Activated CD4-positive, alpha-beta T cell treated with anti-CD3 and anti-CD28 coated beads for 36 hours (primary cell): ENCODE measurements at regions of chr10 and their contacts with region 1.

Region 1: GRCh38 chr10:79195091-79195923 is 126.5 kb downstream of the ZMIZ1 start:
- DNase-seq: peak; percentile 89
- ATAC-seq: peak; percentile 93
- H3K4me3 Mint-ChIP-seq: no peak overlapping the region
- H3K27ac Mint-ChIP-seq: no peak overlapping the region
- H3K4me1 Mint-ChIP-seq: no peaks in the 10 kb centered on the region
- H3K27me3 Mint-ChIP-seq: no peaks in the 10 kb centered on the region

Region 2: DNA sequence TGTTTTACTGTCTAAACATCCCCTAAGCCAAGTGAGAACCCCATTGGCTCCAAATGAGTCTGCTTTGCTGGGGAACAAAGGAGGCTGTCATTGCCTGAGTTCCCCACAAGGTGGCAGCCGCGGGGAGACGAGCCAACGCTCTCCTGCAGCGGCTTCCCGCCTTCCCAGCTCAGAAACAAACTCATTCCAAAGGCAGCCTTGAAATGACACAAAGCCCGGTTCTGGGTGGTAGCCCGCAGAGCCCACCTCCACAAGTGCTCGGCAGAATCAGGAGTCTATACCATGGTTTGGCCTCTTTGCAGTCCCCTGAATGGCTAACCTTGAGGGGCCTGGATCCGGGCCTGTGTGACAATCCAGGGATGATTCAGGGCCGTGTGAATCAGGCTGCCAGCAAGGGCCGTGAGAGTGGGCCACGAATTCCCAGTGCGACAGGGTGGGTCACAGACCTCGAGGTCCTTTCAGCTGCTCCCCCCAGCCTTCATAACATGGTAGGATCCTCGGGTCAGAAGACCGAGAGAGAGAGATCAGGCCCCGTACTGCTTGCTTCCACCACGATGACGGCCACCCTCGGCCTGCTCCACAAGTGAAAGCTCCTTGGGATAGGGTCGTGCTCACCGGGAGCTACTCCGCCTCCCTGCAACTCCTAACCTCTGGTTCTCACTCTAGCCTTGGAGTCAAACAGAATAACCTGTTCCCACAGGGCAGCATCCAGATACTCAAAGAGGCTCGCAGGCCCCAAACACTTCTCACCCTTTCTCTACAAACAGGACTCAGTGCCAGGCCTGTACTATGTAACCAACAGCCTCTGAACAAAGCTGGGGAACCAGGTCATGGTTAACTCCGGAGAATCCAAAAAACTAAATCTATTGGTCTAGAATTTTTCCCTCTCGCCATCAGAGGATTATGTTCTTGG is 1348.3 kb before region 1 on chr10:
- CTCF ChIA-PET with region 1: interaction called, 3 read pairs
- POLR2A ChIA-PET with region 1: no interaction called
- intact Hi-C with region 1: loop called in 1 of 2 experiments (anchors 2 kb)
- DNase-seq: peak; percentile 79
- ATAC-seq: peak; percentile 89
- H3K4me3 Mint-ChIP-seq: no peak overlapping the region
- H3K27ac Mint-ChIP-seq: no peak overlapping the region
- H3K4me1 Mint-ChIP-seq: no peaks in the 10 kb centered on the region
- H3K27me3 Mint-ChIP-seq: no peaks in the 10 kb centered on the region

Region 3: GRCh38 chr10:78255796-78256638 is 939.3 kb before region 1 on chr10:
- CTCF ChIA-PET with region 1: no interaction called
- POLR2A ChIA-PET with region 1: no interaction called
- intact Hi-C with region 1: loop called in 1 of 2 experiments (anchors 5 kb)
- DNase-seq: no peak
- ATAC-seq: no peak
- H3K4me3 Mint-ChIP-seq: no peak overlapping the region
- H3K27ac Mint-ChIP-seq: no peak overlapping the region
- H3K4me1 Mint-ChIP-seq: no peaks in the 10 kb centered on the region
- H3K27me3 Mint-ChIP-seq: no peaks in the 10 kb centered on the region

Region 4: DNA sequence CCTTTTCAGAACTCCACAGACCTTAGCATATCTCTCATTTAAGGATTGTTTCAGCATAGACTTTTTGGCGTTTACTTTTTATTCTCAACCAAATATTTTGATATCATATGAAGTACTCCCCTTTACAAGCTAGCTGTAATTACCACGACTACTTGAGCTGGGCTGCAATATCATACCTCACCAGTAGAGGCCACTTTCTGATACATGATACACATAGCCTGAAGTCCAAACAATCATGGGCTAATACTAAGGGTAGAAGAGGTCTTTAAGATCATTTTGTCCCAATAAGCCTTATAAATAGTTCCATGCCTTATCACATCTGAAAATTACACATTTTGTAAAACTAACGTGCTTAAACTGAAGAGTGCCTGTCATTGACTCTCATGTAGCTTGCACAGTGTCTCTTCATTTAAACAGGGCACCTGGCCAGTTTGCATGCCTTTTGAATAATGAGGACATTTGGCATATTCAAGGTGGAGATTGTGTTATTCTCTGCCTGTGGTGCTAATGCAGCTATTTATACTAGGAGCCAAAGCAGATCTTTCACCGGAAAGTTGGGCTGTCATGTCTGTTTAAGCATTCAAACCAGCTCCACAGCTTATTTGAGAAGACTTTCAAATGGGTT is 530.3 kb before region 1 on chr10:
- CTCF ChIA-PET with region 1: interaction called, 6 read pairs
- POLR2A ChIA-PET with region 1: no interaction called
- intact Hi-C with region 1: loop called in 1 of 2 experiments (anchors 2 kb)
- DNase-seq: peak; percentile 32
- ATAC-seq: no peak
- H3K4me3 Mint-ChIP-seq: no peak overlapping the region
- H3K27ac Mint-ChIP-seq: no peak overlapping the region
- H3K4me1 Mint-ChIP-seq: no peaks in the 10 kb centered on the region
- H3K27me3 Mint-ChIP-seq: peaks cover 38% of the 10 kb centered on the region

Region 5: DNA sequence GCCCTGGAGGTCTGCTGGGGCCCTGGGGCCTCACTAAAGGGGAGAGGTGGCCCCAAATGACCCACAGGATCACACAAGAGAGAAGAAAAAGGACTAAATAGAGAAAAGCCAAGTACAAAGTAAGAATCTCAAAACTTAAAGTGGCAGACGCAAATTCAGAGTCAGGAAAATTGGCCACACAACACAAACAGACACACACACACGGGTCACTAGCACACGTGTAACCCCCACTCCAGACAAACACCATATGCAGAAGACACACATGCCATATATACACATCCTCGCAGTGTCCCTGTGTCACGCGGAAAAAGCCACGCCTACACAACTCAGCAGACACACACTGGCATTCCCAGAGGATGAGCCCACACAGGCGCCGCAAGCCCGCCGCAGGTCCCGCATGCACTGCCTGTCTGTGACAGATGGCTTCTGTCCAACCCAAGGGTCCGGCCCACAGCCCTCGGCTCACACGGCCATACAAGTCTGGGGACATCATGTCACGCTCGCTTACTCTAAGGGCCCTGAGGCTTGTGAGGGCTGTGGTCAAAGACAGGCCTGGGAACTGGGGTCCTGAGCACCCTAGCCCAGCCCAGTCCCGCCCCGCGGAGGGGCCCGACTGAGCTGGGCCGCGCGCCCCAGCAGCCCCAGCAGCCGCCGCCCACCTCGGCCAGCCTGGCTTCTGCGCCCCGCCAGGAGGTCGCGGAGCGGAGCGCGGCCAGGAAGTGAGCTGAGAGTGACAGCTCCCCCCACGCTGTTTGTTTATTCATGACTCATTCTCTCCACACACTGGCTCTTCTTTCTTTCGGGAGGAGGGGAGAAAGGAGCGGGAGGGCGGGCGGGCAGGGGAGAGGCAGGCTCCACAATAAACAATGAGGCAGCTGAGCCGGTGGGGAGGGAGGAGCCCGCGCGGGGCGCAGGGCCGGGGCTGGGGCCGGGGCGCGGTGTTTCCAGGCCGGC is 222.1 kb before region 1 on chr10:
- CTCF ChIA-PET with region 1: interaction called, 6 read pairs
- POLR2A ChIA-PET with region 1: no interaction called
- intact Hi-C with region 1: loop called in 1 of 2 experiments (anchors 1 kb)
- DNase-seq: peak; percentile 86
- ATAC-seq: peak; percentile 63
- H3K4me3 Mint-ChIP-seq: peak overlapping the region; percentile 58
- H3K27ac Mint-ChIP-seq: peak overlapping the region; percentile 77
- H3K4me1 Mint-ChIP-seq: peaks cover 32% of the 10 kb centered on the region
- H3K27me3 Mint-ChIP-seq: peaks cover 2% of the 10 kb centered on the region